Left lung (tissue), 14 donors: ENCODE measurements at regions of chr17 and their contacts with region 1.

Region 1: GRCh38 chr17:40362696-40363110 is 1.8 kb downstream of the GJD3 start:
- DNase-seq: peak in 3 of 4 donors; percentile 70 to 94 (median 83)
- ATAC-seq: peak; percentile 80
- H3K4me3 ChIP-seq: peak overlapping the region; percentile 49 to 54
- H3K27ac ChIP-seq: peak overlapping the region in 1 of 2 donors; percentile 50
- H3K4me1 ChIP-seq: peaks cover 0 to 42% of the 10 kb centered on the region in 2 donors
- H3K27me3 ChIP-seq: peaks cover 0 to 45% of the 10 kb centered on the region in 2 donors
- CTCF ChIP-seq: peak; percentile 61 to 65

Region 2: GRCh38 chr17:40303009-40303657 is 59.6 kb before region 1 on chr17:
- intact Hi-C with region 1: loop called in 1 of 2 experiments (anchors 10 kb)
- DNase-seq: peak in 1 of 4 donors; percentile 79
- ATAC-seq: peak; percentile 70
- H3K4me3 ChIP-seq: no peak overlapping the region
- H3K27ac ChIP-seq: peak overlapping the region in 1 of 2 donors; percentile 0
- H3K4me1 ChIP-seq: peaks cover 30 to 41% of the 10 kb centered on the region in 2 donors
- H3K27me3 ChIP-seq: no peaks in the 10 kb centered on the region
- CTCF ChIP-seq: peak; percentile 69 to 76

Region 3: DNA sequence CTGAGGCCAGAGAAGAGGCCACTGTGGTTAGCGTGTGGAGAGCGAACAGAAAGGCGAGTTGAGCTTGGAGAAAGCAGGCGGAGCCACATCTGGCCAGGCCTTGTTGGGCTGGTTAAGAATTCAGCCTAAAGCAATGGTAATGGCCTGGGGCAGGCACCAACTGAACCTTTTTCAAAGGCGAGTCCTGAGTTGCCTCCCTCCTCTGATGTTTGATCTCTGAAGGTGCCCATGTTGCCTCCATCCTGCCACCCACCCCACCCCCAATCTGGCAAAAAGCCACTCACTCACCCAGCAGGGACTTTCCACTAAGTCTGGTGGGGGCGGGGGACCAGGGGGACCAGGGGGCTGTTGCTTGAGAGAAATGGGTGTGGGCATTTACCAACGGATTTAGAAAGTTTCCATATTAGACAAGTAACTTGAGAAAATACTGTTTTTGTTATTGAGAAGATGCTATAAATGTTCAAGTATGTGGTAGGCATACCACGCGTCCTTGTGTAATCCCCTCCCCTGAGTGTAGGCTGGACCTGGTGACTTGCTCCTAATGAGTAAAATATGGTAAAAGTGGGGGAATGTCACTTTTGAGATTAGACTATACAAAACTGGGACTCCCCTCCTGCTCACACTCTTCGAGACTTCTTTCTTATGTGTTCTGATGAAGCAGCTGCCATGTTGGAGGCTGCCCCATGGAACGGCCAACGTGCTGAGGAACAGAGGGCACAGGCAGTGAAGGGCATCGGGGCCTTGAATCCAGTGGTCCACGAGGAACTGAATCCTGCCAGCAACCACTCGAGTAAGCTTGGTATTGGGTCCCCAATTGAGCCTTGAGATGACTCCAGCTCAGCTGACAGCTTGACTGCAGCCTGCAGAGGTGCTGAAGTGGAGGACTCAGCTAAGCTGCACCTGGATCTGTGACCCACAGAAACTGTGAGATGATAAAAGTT is 168.6 kb after region 1 on chr17:
- intact Hi-C with region 1: loop called in 1 of 2 experiments (anchors 5 kb)
- DNase-seq: peak in 1 of 4 donors; percentile 28
- ATAC-seq: no peak
- H3K4me3 ChIP-seq: no peak overlapping the region
- H3K27ac ChIP-seq: peak overlapping the region in 1 of 2 donors; percentile 23
- H3K4me1 ChIP-seq: peaks cover 19 to 32% of the 10 kb centered on the region in 2 donors
- H3K27me3 ChIP-seq: no peaks in the 10 kb centered on the region
- CTCF ChIP-seq: no peak

Region 4: DNA sequence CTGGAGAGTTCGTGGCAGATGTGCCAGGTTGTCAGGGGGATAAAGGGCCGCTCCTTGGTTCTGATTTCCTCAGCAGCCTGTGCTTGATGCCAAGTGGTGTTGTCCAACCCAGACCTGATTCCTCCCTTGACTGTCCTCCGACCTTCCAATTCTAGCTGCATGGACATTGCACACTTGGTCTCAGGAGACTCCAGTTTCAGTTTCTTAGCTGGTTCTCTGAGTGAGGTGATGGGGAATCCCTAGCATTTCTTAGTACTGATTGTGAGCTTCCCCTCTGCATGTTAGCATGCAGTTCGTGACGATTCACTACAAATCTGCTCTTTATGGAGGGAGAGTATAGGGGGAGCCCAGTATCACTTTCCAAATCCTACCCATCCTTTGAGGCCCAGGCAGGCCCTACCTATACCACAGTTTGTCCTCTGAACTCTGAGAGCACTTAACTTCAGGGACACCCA is 214.9 kb after region 1 on chr17:
- intact Hi-C with region 1: no loop called
- DNase-seq: no peak
- ATAC-seq: no peak
- H3K4me3 ChIP-seq: no peak overlapping the region
- H3K27ac ChIP-seq: no peak overlapping the region
- H3K4me1 ChIP-seq: peaks cover 0 to 10% of the 10 kb centered on the region in 2 donors
- H3K27me3 ChIP-seq: no peaks in the 10 kb centered on the region
- CTCF ChIP-seq: no peak

Region 5: DNA sequence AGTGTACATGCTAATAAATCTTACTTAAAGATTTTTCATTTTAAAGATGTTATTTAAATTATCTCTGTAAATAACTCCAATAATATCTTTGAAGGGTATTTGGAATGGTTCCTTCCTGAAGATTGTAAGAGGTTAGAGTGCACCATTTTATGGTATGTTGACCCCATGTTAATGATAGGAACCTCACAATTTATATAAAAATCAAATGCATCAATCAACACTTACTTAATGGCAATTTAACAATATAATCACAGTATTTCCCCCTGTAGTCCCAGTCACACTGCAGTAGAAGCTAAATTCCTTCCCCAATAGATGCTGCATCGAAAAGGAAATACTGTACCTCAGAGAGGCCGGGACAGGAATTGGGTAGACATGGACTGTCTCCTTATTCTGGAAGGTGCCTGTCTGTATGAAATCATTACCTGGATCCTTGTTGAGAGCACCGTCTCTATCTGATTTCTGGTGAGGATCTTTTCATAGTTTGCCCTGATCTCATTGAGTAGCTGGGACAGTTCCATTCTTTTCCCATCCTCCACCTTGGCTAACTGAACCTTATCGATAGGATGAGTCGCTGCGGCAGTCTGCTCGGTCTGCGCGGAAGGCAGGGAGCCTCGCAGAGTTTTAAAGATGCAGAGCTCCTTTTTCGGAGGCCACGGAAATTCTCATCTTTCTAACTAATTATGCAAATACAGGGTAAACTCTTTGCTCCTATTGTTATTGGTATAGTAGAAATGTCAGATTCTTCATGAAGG is 302.1 kb after region 1 on chr17 and contains the start of gene KRT222:
- intact Hi-C with region 1: no loop called
- DNase-seq: no peak
- ATAC-seq: no peak
- H3K4me3 ChIP-seq: peak within 1 kb of the TSS in 1 of 2 donors; percentile 13
- H3K27ac ChIP-seq: no peak within 1 kb of the TSS
- H3K4me1 ChIP-seq: no peaks in the 10 kb centered on the region
- H3K27me3 ChIP-seq: peaks cover 10 to 43% of the 10 kb centered on the region in 2 donors
- CTCF ChIP-seq: no peak
- polyA plus RNA-seq, gene KRT222: 0.21 to 0.61 (median 0.37) TPM